ENCODE measurements at regions of chr5 and their contacts with region 1.

Region 1: GRCh38 chr5:132386644-132387286 is 17.3 kb downstream of the SLC22A5 start:
- DNase-seq: peak; percentile 46
- ATAC-seq: peak; percentile 56
- H3K4me3 ChIP-seq: no peak overlapping the region
- H3K27ac ChIP-seq: peak overlapping the region; percentile 80
- H3K4me1 ChIP-seq: peaks cover 44 to 61% of the 10 kb centered on the region in 2 experiments
- H3K27me3 ChIP-seq: no peaks in the 10 kb centered on the region
- CTCF ChIP-seq: peak in 2 of 3 experiments; percentile 82 to 83; a peak in 4 of 6 replicates
- POLR2A ChIP-seq: no peak
- RAD21 ChIP-seq: no peak

Region 2: DNA sequence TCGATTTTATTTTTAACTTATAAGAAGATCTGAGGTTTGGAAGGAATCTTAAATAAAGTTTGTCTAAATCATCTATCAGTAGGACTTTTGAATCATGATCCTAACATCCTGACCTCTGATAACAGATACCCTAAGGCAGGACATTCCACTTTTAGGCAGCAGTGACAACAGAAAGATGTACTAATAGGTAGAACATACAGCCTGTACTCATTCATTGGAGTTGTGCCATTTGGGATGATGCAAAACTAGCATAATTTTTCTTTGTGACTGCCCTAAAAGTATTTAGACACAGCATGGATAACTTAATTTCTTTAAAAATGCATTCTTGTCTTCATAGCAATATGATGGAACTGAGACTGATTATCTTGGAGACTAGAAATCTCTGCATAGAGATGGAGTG is 1083.2 kb before region 1 on chr5:
- CTCF ChIA-PET with region 1: no interaction called
- POLR2A ChIA-PET with region 1: no interaction called
- RAD21 ChIA-PET with region 1: no interaction called
- intact Hi-C with region 1: no loop called
- DNase-seq: no peak
- ATAC-seq: no peak
- H3K4me3 ChIP-seq: no peak overlapping the region
- H3K27ac ChIP-seq: no peak overlapping the region
- H3K4me1 ChIP-seq: 0 out of 4 replicates have a peak, but pooled peaks cover 0 to 4% of the 10 kb centered on the region in 2 experiments
- H3K27me3 ChIP-seq: no peaks in the 10 kb centered on the region
- CTCF ChIP-seq: no peak
- POLR2A ChIP-seq: no peak
- RAD21 ChIP-seq: no peak

Region 3: GRCh38 chr5:132064738-132065331 is 321.9 kb before region 1 on chr5:
- CTCF ChIA-PET with region 1: no interaction called
- POLR2A ChIA-PET with region 1: no interaction called
- RAD21 ChIA-PET with region 1: no interaction called
- intact Hi-C with region 1: loop called (anchors 1 kb)
- DNase-seq: peak; percentile 71
- ATAC-seq: peak; percentile 86
- H3K4me3 ChIP-seq: no peak overlapping the region
- H3K27ac ChIP-seq: peak overlapping the region; percentile 8; the same call in 1 of the 2 replicates
- H3K4me1 ChIP-seq: peaks cover 0 to 4% of the 10 kb centered on the region in 2 experiments; a peak in 1 of 4 replicates
- H3K27me3 ChIP-seq: no peaks in the 10 kb centered on the region
- CTCF ChIP-seq: peak; percentile 75 to 98 (median 93)
- POLR2A ChIP-seq: no peak
- RAD21 ChIP-seq: peak; percentile 78

Region 4: DNA sequence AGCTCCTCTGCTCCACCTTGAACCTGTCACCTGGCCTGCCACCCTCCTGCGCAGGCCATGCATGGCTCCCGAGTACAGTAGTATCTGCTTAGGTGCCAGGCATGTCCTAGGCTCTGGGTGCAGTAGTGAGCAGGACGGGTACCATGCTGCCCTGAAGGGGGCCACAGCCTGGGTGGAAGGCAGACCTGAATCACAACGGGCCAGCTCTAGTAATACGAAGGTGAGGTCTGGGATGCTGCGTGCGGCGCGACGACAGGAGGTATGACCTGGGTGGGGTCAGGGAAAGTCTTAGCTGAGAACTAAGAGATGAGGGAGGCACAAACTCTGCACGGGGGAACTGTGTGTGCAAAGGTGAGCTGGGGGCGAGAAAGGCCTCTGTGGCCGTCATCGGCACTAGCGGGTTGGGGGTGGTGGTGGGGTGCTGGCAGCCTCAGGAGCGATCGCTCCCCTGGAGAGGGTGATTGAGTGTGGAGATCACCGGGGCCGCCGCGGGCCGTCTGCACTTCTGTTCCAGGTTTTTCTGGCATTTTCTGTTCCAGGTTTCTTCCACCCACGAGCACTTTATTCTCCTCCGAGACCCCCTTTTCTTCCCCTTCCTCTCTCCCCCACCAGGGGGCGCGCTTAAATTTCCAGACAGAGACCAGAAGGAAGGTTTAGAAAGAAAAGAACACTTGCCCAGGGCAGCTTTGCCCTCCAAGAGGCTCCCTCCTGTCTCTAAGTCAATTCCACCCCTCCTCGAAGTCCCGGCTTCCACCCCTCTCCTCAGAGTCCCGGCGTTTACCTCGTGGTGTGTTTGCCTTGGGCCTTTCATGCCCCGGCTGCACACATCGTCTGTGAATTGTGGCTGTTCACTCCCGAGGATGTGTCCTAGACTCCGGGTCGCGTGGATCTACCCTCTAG is 114.2 kb before region 1 on chr5:
- CTCF ChIA-PET with region 1: no interaction called
- POLR2A ChIA-PET with region 1: no interaction called
- RAD21 ChIA-PET with region 1: no interaction called
- intact Hi-C with region 1: no loop called
- DNase-seq: no peak
- ATAC-seq: peak; percentile 80
- H3K4me3 ChIP-seq: no peak overlapping the region
- H3K27ac ChIP-seq: no peak overlapping the region
- H3K4me1 ChIP-seq: peaks cover 0 to 9% of the 10 kb centered on the region in 2 experiments; a peak in 2 of 4 replicates
- H3K27me3 ChIP-seq: no peaks in the 10 kb centered on the region
- CTCF ChIP-seq: peak; percentile 80 to 90 (median 86)
- POLR2A ChIP-seq: no peak
- RAD21 ChIP-seq: peak; percentile 78

Region 5: DNA sequence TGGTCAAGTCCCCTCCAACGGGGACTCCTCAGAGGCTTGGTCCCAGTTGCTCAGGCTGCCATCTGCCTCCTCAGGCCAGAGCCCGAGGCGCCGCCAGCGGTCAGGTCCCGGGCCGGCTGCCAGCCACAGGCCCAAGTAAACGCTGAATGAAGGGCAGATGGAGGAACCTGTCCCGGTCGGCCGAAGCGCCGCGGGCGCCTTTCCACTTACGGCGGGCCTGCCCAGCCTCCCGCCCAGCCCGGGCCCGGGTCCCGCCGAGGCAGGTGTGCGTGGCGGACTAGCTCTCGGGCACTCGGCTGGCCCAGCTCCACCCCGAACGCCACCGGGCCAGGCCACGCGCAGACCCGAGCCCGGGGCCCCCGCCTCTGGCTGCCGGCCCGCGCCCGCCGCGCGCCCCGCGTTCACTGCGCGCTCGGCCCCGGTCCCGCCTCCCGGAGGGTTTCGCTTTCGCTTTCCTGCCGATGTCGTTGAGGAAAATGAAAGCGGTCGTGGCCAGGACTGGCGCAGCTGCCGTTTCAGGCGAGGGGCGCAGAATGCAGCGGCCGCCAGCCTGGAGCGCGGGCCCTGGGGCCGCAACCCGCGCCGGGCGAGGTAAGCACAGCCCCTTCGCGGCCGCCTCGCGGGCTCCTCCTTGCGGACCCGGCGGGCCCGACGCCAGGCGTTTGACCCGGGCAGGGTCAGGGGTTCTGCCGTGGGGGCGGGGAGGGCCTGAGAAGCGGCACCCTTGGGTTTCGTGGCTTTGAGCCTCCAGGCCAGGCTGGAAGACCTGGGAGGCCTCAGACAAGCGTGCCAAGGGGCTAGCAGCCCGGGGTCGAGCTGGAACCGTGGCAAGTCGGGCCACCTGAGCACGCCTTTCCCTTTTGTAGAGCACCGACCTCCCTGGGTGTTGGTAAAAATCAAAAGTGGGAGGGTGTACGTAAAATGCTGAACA is 24.0 kb after region 1 on chr5:
- CTCF ChIA-PET with region 1: interaction called, 7 read pairs
- POLR2A ChIA-PET with region 1: interaction called, 3 read pairs
- RAD21 ChIA-PET with region 1: interaction called in 1 of 2 experiments, 6 read pairs
- intact Hi-C with region 1: loop called (anchors 2 kb)
- DNase-seq: no peak
- ATAC-seq: peak; percentile 86
- H3K4me3 ChIP-seq: peak overlapping the region; percentile 53 to 64
- H3K27ac ChIP-seq: peak overlapping the region; percentile 91
- H3K4me1 ChIP-seq: peaks cover 31 to 71% of the 10 kb centered on the region in 2 experiments
- H3K27me3 ChIP-seq: no peaks in the 10 kb centered on the region
- CTCF ChIP-seq: peak; percentile 25 to 76 (median 61); a peak in 4 of 6 replicates
- POLR2A ChIP-seq: no peak
- RAD21 ChIP-seq: peak; percentile 56

Region 6: GRCh38 chr5:132500931-132501630 is 114.3 kb after region 1 on chr5:
- CTCF ChIA-PET with region 1: interaction called, 37 read pairs
- POLR2A ChIA-PET with region 1: interaction called, 9 read pairs
- RAD21 ChIA-PET with region 1: interaction called, 9 to 13 read pairs
- intact Hi-C with region 1: loop called (anchors 1 kb)
- DNase-seq: no peak
- ATAC-seq: no peak
- H3K4me3 ChIP-seq: no peak overlapping the region
- H3K27ac ChIP-seq: no peak overlapping the region; the same call in 1 of the 2 replicates
- H3K4me1 ChIP-seq: peaks cover 15 to 64% of the 10 kb centered on the region in 2 experiments
- H3K27me3 ChIP-seq: no peaks in the 10 kb centered on the region
- CTCF ChIP-seq: peak in 2 of 3 experiments; percentile 78 to 96; a peak in 4 of 6 replicates
- POLR2A ChIP-seq: no peak
- RAD21 ChIP-seq: no peak

Region 7: GRCh38 chr5:132556763-132557477 is 170.2 kb after region 1 on chr5 and contains the start of gene RAD50:
- CTCF ChIA-PET with region 1: no interaction called
- POLR2A ChIA-PET with region 1: no interaction called
- RAD21 ChIA-PET with region 1: no interaction called
- intact Hi-C with region 1: loop called (anchors 1 kb)
- DNase-seq: peak; percentile 91
- ATAC-seq: peak; percentile 96
- H3K4me3 ChIP-seq: peak within 1 kb of the TSS; percentile 66 to 84
- H3K27ac ChIP-seq: peak within 1 kb of the TSS; percentile 96
- H3K4me1 ChIP-seq: peaks cover 3 to 18% of the 10 kb centered on the region in 2 experiments; a peak in 3 of 4 replicates
- H3K27me3 ChIP-seq: no peaks in the 10 kb centered on the region
- CTCF ChIP-seq: no peak
- POLR2A ChIP-seq: peak; percentile 85
- RAD21 ChIP-seq: no peak
- total RNA-seq, gene RAD50: 43.6 TPM

Region 8: DNA sequence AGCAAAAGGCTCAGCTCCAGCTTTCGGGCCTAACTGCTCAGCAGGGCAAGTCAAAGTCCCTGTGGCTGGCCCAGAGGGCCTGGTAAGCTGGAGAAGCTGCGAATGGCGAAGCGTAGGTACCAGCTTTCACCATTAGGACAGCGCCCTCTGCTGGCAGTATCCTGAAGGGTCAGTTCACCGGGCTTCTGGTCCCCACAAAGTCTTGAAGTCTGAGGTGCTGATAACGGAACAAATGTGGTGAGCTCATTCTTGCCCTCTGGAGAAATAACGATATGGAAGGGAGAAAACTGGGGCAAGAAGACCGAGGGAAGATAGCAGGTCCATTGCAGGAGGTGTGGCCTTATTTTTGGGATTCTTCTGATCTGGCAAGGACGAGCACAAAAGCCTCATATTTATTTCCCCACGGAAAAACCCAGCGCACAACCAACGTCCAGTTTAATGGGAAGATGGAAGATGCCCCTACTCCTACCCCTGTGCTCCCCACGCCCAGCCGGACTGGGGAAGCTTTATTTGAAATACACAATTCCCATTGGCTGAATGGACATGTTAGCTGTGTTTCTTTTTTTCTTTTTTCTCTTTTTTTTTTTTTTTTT is 433.5 kb after region 1 on chr5:
- CTCF ChIA-PET with region 1: interaction called, 17 read pairs
- POLR2A ChIA-PET with region 1: no interaction called
- RAD21 ChIA-PET with region 1: no interaction called
- intact Hi-C with region 1: loop called (anchors 2 kb)
- DNase-seq: peak; percentile 81
- ATAC-seq: peak; percentile 94
- H3K4me3 ChIP-seq: no peak overlapping the region
- H3K27ac ChIP-seq: no peak overlapping the region
- H3K4me1 ChIP-seq: peaks cover 0 to 11% of the 10 kb centered on the region in 2 experiments; a peak in 1 of 4 replicates
- H3K27me3 ChIP-seq: no peaks in the 10 kb centered on the region
- CTCF ChIP-seq: peak; percentile 90 to 94 (median 91)
- POLR2A ChIP-seq: no peak
- RAD21 ChIP-seq: peak; percentile 95

Region 9: DNA sequence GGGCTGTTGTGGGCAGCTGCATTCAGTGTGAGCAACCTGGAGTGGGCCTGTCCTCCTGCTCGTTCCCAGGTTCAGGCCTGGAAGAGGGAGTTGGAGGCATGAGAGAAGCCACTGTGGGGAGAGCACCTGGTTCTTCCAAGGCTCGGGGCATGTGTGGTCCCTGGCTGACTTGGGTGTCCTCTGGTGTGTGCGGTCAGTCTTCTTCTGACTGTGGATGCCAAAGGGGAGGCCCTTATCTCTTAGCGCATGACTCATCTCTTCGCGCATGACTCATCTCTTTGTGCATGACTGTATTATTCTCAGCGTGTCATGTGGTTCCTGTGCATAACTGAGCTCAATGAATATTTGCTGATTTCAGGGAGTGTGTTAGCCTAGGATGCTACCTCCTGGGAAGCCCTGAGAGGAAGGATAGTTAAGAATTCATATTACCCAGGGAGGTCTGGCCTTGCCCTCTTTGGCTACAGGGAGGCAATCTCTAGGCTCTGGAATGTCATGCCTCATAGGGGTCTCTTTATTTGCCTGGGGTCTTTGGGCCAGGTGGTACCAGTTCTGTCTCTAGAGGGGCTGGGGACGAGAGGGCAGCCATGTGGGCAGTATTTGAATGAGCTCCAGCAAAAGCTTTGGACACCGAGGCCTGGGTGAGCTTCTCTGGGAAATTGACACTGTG is 853.8 kb after region 1 on chr5:
- CTCF ChIA-PET with region 1: no interaction called
- POLR2A ChIA-PET with region 1: no interaction called
- RAD21 ChIA-PET with region 1: no interaction called
- intact Hi-C with region 1: loop called (anchors 10 kb)
- DNase-seq: peak; percentile 90
- ATAC-seq: peak; percentile 86
- H3K4me3 ChIP-seq: peak overlapping the region in 1 of 2 experiments; percentile 35; a peak in 2 of 4 replicates
- H3K27ac ChIP-seq: peak overlapping the region; percentile 40
- H3K4me1 ChIP-seq: peaks cover 26 to 68% of the 10 kb centered on the region in 2 experiments
- H3K27me3 ChIP-seq: no peaks in the 10 kb centered on the region
- CTCF ChIP-seq: no peak
- POLR2A ChIP-seq: no peak
- RAD21 ChIP-seq: no peak

Measured in HCT116 (cell line).